ENCODE measurements at regions of chr14 and their contacts with region 1.

Region 1: DNA sequence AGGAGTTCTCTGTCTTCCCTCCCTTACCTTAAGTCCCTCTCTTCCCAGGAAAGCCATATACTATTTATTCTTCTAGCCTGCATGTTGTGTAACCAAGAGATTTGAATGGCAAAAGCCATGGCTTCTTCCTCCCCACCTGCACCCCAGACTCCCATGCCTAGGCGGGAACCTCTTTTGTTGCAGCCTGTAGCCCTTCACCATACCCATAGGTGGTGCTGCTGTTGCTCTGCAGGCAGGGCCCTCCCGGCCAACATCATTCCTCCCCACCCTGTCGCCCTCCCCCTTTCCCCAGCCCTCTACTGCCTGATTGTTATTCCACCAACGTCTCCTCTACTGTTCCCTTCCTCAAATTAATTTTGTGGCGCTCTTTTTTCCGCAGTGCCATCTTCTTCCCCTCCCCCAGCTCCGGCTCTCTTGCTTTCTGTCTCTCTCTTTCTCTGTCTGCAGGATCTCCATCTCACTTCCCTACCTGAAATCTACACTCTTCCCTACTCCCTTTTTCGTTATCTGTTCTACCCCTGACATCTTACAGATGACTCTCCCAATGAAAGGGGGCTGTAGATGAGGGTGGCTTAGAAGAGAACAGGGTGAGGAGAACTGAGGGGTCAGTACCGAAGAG is 13.8 kb downstream of the NGDN start:
- DNase-seq: peak; percentile 24
- ATAC-seq: peak; percentile 64
- H3K4me3 Mint-ChIP-seq: no peak overlapping the region
- H3K27ac Mint-ChIP-seq: no peak overlapping the region
- H3K4me1 Mint-ChIP-seq: peaks cover 4% of the 10 kb centered on the region
- H3K27me3 Mint-ChIP-seq: no peaks in the 10 kb centered on the region

Region 2: DNA sequence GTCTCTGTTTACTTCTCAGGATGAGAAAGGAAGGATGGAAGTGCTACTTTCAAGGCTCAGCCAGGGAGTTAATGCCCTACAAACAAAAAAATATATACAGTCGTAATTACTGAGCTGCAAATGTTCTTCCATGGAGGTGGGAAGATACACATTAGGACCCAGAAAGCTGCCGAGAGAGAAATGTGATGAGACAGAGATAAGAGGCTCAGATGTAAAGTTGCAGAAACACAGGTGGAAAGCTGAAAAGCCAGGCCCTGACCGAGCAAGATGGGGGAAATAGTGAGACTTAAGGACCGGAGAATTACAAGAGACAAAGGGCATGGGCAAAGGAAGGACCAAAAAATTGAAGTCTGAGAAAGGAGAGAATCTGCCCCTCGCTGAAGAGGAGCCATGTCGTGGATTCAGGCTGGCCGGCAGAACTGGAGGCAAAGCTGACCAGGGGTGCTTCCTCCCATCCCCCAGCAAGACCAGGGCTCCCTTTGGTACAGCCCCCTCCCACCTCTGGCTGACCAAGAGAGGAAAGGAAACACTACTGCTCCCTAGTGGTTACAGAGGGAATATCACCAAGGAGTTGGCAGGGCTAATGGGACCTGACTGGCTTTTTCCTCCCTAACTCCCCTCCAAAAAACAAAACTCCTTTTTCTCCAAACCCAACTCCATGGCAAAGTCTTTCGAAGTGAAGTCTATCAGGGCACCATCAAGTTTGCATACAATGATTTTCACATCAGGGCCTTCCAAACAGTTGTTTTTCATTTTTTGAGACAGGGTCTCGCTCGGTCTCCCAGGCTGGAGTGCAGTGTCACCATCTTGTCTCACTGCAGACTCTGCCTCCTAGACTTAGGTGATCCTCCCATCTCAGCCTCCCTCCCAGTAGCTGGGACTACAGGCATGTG is 56.1 kb after region 1 on chr14:
- CTCF ChIA-PET with region 1: interaction called, 69 read pairs
- POLR2A ChIA-PET with region 1: no interaction called
- DNase-seq: peak; percentile 41
- ATAC-seq: peak; percentile 62
- H3K4me3 Mint-ChIP-seq: no peak overlapping the region
- H3K27ac Mint-ChIP-seq: no peak overlapping the region
- H3K4me1 Mint-ChIP-seq: no peaks in the 10 kb centered on the region
- H3K27me3 Mint-ChIP-seq: peaks cover 2% of the 10 kb centered on the region

Measured in activated CD8-positive, alpha-beta T cell treated with anti-CD3 and anti-CD28 coated beads, Interleukin-2, amount 10 ng/mL, durations not matched to agents 7 days and 5 days (primary cell).